ENCODE measurements at regions of chr11 and their contacts with region 1.

Region 1: DNA sequence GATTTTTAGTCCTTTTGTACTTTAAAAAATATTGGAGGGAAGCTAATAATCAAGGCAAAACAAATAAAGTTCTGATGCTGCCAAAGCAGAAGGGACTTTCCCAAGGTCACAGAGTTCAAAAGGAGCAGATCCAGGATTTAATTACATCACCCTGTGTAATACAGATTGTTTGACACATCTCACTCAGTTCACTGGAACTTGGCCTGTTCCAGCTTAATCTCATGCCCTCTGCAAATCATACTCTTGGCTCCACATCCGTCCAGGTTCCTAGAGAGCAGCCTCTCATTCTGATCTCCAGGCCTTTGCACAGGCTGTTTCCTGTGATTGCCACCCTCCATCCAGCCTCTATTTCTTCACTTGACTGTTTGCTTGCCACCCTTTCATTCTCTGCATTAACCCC is 151.7 kb downstream of the SPON1 start:
- DNase-seq: no peak
- H3K4me3 ChIP-seq: no peak overlapping the region
- CTCF ChIP-seq: no peak
- POLR2A ChIP-seq: no peak

Region 2: DNA sequence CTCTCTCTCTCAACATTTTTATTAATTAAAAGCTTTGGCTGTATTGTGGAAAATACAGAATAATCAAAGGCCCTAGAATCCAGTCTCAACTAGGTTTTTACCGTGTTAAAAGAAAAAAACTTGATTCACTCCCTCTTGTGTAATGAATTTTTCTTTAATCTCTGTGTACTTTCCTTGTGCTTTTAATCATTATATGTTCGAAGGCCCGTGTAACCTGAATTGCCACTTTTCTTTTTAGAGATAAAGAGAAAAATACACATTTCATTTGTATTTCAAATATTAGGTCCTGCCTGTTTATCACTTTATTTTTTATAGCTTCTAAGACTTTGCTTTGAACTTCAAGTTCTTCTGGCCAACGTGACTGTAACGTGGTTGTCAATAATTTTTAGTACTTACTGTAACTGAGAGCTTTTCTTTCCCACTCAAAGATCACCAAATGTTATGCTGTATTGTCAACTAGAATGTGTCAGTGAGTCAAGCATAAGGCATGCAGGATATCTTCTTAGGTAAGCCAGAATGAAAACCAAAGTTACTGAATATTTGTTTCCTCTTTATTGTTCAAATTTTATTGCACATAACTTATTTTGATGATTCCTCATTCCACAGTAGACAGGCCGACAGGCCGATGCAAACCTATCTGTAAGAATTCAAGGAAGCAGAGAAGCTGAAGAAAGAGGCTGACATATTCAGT is 469.1 kb before region 1 on chr11:
- intact Hi-C with region 1: no loop called
- DNase-seq: no peak
- H3K4me3 ChIP-seq: no peak overlapping the region
- CTCF ChIP-seq: no peak
- POLR2A ChIP-seq: no peak

Region 3: DNA sequence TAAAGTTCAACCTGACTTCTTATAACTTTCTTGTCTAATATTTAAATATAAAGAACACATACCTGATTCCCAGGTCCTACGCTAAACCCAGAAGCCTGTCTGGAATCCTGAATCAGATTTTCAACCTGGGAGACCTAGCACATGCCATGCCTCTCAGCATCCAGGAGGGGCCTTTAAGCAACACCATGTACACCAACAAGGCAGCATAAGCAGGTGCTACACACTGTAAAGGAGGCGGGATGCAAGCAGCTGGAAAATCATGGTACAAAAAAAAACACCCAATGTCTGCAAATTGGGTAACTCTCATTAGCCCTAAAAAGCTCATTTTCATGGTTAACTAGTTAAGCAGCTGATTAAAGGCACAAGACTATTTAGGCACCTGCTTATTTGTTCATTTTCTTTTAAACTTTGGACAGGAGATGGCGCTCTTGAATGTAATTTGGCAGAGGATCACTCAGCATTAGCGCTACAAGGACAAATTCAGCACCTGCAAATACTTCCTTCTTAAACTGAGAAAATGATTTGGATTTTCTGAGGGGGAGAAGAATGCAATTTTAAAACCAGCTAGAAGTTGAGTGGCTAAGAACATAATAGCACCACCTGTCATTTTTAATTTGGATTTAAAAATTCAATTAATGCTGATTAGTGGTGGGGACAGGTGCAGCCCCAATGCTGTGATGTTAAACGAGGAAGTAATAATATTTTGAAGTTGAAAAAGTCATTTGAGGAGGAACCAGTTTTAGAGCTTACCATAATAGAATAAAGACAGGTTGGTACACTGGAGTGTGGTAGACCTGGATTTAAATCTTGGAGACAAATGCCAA is 341.8 kb before region 1 on chr11:
- intact Hi-C with region 1: no loop called
- DNase-seq: no peak
- H3K4me3 ChIP-seq: no peak overlapping the region
- CTCF ChIP-seq: no peak
- POLR2A ChIP-seq: no peak

Region 4: GRCh38 chr11:14065141-14065540 is 49.1 kb before region 1 on chr11:
- intact Hi-C with region 1: loop called (anchors 1 kb)
- DNase-seq: no peak
- H3K4me3 ChIP-seq: no peak overlapping the region
- CTCF ChIP-seq: no peak
- POLR2A ChIP-seq: no peak

Region 5: DNA sequence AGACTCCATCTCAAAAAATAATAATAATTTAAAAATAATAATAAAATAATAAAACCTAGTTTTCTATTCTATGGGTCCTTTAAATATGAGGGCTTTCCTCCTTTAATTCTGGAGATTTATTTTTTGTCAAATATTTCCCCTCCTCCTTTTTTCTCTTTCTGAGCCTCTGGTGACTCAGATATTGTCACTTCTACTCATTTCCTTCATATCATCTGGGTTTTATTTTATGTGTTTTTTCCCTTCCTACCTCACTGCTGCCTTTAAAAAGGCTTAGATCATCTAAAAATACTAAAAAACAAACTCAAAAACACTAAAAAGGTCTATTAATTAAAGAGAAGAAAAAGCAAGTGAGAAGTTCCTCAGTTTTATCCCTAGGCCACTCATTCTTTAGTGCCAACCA is 12.9 kb before region 1 on chr11:
- intact Hi-C with region 1: no loop called
- DNase-seq: no peak
- H3K4me3 ChIP-seq: no peak overlapping the region
- CTCF ChIP-seq: no peak
- POLR2A ChIP-seq: no peak

Region 6: DNA sequence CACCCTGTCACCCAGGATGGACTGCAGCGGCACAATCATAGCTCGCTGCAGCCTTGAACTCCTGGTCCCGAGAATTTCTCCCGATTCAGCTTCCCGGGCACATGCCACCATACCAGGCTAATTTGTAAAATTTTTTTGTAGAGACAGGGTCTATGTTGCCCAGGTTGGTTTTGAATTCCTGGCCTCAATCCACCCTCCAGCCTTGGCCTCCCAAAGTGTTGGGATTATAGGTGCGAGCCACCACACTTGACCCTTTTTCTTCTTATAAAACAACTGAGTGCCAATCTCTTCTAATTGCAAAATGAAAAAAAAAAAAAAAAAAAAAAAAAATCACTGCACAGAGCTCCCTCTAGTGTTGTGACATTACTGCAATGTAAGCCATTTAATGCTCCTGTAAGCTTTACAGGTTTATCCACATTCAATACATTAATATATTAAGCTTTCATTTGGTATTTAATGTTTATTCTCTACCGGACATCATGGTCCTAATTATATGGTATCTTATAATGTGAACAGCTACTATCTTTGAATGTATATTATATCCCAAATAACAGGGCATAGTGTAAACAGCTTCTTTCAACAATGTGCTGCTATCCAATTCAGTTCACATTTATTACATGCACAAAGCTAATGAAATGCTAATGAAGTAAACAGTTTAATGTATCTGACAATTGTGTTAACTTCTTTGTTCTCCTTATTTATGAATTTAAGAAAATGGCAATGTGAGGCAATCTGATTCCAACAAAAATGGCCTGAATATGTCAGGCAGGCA is 340.8 kb after region 1 on chr11:
- intact Hi-C with region 1: no loop called
- DNase-seq: no peak
- H3K4me3 ChIP-seq: no peak overlapping the region
- CTCF ChIP-seq: no peak
- POLR2A ChIP-seq: no peak

Measured in lower leg skin (tissue), 4 donors.